Dorsolateral prefrontal cortex (tissue), 120 donors: ENCODE measurements at regions of chr17 and their contacts with region 1.

Region 1: DNA sequence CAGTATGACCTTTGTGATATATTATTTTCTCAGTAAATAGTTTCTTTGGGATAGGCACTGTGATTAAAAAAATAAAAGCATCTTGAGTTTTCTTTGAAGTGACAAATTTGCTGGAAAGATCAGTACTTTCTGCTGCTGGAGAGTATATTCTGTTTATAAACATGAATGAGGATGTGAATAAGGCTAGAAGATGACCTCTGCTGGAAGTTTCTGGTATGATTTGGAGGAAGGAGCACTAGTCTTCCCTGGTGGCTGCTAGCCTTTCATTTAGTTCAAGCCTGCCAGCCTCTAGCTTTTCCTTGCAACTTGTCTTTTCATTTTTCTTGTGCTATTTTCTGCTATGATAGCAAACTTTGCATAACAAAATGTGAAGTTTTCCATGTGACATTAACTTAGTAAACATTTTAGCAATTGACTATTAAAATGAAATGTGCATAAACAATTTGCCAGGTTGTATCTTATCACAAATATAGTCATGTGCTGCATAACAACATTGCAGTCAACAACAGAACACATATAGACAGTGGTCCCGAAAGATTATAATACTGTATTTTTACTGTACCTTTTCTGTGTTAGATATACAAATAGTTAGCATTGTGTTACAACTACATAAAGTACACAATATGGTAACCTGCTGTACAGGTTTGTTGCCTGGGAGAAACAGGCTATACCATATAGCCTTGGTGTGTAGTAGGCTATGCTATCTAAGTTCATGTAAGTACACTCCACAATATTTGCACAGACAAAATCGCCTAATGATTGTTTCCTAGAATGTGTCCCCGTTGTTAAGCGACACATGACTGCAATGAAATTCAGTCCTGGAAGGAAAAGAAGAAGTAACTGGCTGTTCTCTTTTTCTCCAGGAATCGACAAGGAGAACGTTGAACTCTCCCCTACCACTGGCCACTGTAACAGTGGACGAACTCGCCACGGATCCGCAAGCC is 18.1 kb upstream of the RAB11FIP4 start:
- DNase-seq: no peak
- H3K4me3 ChIP-seq: peak overlapping the region in 1 of 59 donors; percentile 19
- H3K27ac ChIP-seq: peak overlapping the region in 46 of 59 donors; percentile 3 to 78 (median 51)
- H3K27me3 ChIP-seq: no peaks in the 10 kb centered on the region
- CTCF ChIP-seq: peak; percentile 46 to 89 (median 76)

Region 2: DNA sequence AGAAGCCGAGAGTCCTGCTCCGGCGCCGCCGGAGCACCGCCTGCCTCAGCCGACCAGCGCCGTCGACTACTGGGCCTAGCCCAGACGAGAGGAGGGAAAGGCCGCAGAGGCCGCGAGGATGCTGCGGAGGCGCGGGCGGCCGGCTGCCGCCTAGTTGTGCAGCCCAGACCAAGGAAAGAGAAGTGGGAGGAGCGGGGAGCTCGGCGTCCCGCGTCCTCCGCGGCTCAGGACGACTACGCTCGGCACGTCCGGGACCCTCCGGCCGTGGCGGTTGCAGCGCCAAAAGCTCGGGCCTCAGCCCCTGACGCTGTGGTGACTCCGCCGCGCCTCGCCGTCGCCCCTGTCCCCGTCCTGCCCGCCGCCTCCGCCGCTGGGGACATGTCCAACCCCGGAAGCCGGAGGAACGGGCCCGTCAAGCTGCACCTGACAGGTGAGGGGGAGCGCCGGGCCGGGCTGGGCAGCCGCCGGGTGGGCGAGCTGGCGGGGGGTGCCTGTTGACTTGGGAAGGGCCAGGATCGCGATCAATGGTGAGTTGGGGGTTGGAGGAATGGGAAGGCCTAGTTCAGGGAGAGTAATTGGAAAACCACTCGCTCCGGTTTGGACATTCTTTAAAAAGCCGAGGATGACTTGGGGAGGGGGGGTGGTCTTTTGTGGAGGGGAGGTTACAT is 364.9 kb before region 1 on chr17:
- intact Hi-C with region 1: loop called (anchors 5 to 10 kb)
- DNase-seq: peak in 8 of 10 donors; percentile 19 to 73 (median 45)
- H3K4me3 ChIP-seq: peak overlapping the region; percentile 58 to 86 (median 73)
- H3K27ac ChIP-seq: peak overlapping the region; percentile 30 to 96 (median 83)
- H3K27me3 ChIP-seq: no peaks in the 10 kb centered on the region
- CTCF ChIP-seq: peak in 7 of 56 donors; percentile 6 to 22 (median 10)

Region 3: GRCh38 chr17:31013844-31014243 is 359.6 kb before region 1 on chr17:
- intact Hi-C with region 1: loop called (anchors 5 to 10 kb)
- DNase-seq: no peak
- H3K4me3 ChIP-seq: no peak overlapping the region
- H3K27ac ChIP-seq: no peak overlapping the region
- H3K27me3 ChIP-seq: no peaks in the 10 kb centered on the region
- CTCF ChIP-seq: no peak

Region 4: GRCh38 chr17:31094600-31095238 is 278.7 kb before region 1 on chr17 and contains the start of gene NF1:
- intact Hi-C with region 1: loop called in 1 of 2 experiments (anchors 10 kb)
- DNase-seq: peak; percentile 90 to 96 (median 95)
- H3K4me3 ChIP-seq: peak within 1 kb of the TSS; percentile 67 to 97 (median 81)
- H3K27ac ChIP-seq: peak within 1 kb of the TSS; percentile 75 to 97 (median 91)
- H3K27me3 ChIP-seq: no peaks in the 10 kb centered on the region
- CTCF ChIP-seq: peak in 41 of 56 donors; percentile 1 to 57 (median 29)
- total RNA-seq, gene NF1: 89.8 to 145 (median 119) TPM

Region 5: DNA sequence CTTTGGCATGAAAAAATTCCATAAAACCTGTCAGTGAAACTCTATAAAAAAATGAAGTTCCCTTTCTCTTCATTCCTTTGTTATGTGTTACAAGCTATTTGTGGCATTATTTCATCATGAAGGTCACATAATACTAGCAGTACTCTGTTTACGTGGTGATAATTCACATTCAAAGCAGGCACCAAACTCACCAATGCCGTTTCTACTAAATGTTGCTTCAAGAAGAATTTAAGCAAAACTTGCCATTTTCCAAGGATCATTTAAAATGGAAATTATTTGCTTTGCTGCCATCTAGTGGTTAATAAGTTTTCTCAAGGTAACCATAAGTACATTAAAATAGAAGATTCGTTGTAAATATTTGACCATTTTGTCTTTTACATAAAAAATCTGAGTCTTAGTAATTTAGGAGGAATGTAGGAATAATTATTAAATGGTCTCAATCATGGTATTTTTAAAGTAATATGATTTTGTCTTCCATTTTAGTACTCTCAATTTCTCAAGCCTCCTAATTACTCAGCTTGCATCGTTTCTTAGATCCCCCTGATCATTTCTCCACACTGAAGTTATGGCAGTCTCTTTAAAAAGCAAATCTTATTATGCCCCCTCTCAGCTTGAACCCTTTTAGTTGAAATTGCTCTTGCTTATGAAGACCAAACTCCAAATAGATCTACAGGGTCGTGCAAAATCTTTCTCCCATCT is 157.2 kb before region 1 on chr17:
- intact Hi-C with region 1: loop called (anchors 10 kb)
- DNase-seq: no peak
- H3K4me3 ChIP-seq: no peak overlapping the region
- H3K27ac ChIP-seq: peak overlapping the region in 3 of 59 donors; percentile 5 to 36 (median 18)
- H3K27me3 ChIP-seq: no peaks in the 10 kb centered on the region
- CTCF ChIP-seq: peak; percentile 63 to 95 (median 79)

Region 6: GRCh38 chr17:31321481-31321880 is 51.9 kb before region 1 on chr17 and contains the start of gene EVI2A:
- intact Hi-C with region 1: loop called (anchors 5 to 10 kb)
- DNase-seq: peak in 7 of 10 donors; percentile 39 to 67 (median 53)
- H3K4me3 ChIP-seq: peak within 1 kb of the TSS; percentile 25 to 78 (median 55)
- H3K27ac ChIP-seq: peak within 1 kb of the TSS; percentile 7 to 98 (median 94)
- H3K27me3 ChIP-seq: no peaks in the 10 kb centered on the region
- CTCF ChIP-seq: peak in 10 of 56 donors; percentile 12 to 34 (median 22)
- total RNA-seq, gene EVI2A: 7.6 to 203 (median 47.5) TPM

Region 7: GRCh38 chr17:31487648-31488263 is 114.3 kb after region 1 on chr17:
- intact Hi-C with region 1: no loop called
- DNase-seq: peak; percentile 89 to 96 (median 93)
- H3K4me3 ChIP-seq: peak overlapping the region; percentile 42 to 86 (median 73)
- H3K27ac ChIP-seq: peak overlapping the region in 58 of 59 donors; percentile 12 to 96 (median 88)
- H3K27me3 ChIP-seq: no peaks in the 10 kb centered on the region
- CTCF ChIP-seq: peak in 5 of 56 donors; percentile 6 to 18 (median 12)